Upper lobe of right lung (tissue), 1 donor: ENCODE measurements at regions of chr5 and their contacts with region 1.

Region 1: DNA sequence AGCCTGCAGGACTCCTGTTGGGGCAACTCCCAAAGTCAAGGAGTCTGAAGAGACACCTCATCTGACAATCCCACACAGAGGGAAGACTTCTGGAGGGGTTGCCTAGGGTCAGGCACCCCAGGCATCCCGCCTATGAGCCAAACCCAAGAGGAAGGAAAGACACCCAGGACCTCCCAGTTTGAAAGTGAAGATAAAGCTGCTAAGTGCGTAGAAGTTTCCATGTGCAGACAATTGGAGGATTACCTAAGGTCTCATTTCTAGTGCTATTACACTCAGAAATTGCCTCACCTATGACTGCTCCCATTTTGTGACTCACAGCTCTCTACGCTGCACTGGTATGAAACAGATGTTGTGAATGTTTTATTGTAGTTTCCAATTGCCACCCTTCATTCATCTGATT is 322.9 kb downstream of the SLIT3 start:
- DNase-seq: no peak
- ATAC-seq: no peak
- H3K4me3 ChIP-seq: no peak overlapping the region
- H3K27ac ChIP-seq: no peak overlapping the region
- H3K4me1 ChIP-seq: peaks cover 13% of the 10 kb centered on the region
- H3K27me3 ChIP-seq: no peaks in the 10 kb centered on the region
- CTCF ChIP-seq: no peak

Region 2: GRCh38 chr5:169548315-169548714 is 570.3 kb after region 1 on chr5:
- intact Hi-C with region 1: loop called (anchors 10 kb)
- DNase-seq: no peak
- ATAC-seq: no peak
- H3K4me3 ChIP-seq: no peak overlapping the region
- H3K27ac ChIP-seq: no peak overlapping the region
- H3K4me1 ChIP-seq: no peaks in the 10 kb centered on the region
- H3K27me3 ChIP-seq: peaks cover 4% of the 10 kb centered on the region
- CTCF ChIP-seq: peak; percentile 38